GM10248 (cell line): ENCODE measurements at regions of chr19 and their contacts with region 1.

Region 1: DNA sequence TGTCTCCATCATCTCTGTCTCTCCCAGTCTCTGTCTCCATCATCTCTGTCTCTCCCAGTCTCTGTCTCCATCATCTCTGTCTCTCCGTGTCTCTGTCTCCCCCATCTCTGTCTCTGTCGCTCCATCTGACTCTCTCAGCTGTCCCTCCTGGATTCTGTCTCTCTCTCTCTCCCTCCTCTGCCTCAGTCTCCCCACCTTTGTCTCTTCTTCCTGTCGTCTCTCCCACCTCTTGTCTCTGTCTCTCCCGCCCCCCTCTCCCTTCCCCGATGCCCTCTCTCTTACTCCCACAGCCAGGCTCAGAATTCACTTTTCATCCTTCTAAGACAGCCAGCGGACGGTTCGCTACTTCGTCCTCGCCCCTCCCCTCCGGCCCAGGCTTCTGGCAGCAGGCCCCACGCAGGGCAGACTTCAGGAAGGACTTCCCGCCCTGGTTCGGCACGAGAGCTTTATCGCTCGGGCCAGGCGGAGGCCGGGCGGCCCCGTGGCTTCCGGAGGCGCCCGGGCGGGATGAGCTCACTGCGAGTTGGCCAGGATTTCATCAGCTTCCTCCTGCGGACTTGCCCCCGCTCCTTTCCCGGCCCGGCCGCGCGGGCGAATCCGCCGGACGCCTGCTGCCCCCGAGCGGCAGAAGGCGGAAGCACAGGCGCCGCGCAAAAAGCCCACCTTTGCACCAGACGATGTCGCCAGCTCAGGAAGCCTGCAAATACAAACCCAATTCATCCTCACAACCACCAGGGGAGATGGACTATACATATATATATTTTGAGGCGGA is 12.4 kb upstream of the CCDC9 start:
- DNase-seq: peak; percentile 89
- CTCF ChIP-seq: peak; percentile 99

Region 2: DNA sequence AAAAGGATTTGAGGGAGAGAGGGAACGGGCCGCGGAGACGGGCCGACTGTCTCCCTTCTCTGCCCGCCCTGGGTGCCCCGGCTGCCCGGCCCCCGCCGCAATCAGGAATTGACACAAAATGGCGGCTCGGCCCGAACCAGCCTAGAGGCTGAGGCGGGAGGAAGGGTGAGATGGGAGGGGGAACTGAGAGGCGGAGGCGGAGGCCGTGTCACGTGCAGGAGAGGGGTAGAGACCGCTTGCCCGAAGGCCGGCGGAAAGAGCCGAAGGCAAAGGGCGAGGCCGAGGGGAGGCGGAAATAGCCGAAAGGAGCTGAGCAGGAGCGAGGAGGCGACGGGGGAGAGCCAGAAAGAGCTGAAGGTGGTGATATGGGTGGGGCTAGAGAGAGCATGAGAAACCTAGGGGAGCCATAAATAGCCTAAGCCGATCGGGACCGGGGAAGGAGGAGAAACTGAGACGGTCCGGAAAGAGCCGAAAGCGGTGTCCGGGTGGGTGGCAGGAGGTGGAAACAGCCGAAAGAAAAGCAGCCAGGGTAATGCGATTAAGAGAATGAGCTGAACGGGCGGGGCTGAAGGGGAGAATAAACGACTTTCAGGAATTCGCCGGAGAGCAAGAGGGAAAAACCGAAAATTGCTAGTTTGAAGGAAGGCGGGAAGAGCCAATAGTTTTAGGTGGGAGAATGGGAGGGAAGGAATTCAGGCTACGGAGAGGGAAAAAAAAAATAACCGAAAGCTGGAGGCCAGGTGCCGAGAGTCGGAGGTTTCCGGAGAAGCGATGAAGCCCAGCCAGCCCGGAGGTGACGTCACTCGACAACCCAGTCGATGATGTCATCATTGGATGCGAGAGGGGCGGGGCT is 130.7 kb before region 1 on chr19 and contains the start of gene ZC3H4:
- CTCF ChIA-PET with region 1: interaction called, 17 read pairs
- POLR2A ChIA-PET with region 1: interaction called, 5 read pairs
- DNase-seq: peak; percentile 98
- CTCF ChIP-seq: no peak

Region 3: DNA sequence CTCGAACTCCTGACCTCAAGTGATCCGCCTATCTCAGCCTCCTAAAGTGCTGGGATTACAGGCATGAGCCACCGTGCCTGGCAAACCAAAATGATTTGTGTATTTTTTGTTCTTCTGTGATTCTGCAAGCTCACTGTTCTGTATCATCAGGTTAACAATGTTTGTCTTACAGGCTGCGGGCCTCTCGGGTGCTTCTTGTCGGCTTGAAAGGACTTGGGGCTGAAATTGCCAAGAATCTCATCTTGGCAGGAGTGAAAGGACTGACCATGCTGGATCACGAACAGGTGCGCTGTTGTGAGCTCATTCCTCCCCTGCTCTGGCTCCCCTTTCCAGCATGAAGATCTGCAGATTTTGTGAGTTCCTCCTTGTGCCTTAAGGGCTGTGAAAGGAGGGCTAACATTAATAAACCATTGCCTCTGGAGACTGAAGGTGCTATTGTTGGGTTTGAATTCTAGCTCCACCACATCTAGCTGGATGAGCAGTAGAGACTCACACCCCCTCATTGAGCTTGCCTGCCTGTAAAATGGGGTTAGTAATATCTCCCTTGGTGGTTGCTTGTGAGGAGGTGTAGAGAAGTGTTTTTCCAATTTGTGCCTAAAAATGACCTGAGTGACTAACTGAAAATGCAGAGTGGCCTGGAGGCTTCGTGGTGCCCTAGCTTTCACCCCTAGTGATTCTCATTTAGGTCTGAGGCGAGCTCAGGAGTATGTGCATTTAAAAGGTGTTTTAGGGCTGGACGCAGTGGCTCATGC is 100.5 kb before region 1 on chr19:
- CTCF ChIA-PET with region 1: interaction called, 194 read pairs
- POLR2A ChIA-PET with region 1: no interaction called
- DNase-seq: no peak
- CTCF ChIP-seq: no peak

Region 4: GRCh38 chr19:47190167-47190727 is 53.7 kb before region 1 on chr19:
- CTCF ChIA-PET with region 1: interaction called, 24 read pairs
- POLR2A ChIA-PET with region 1: interaction called, 5 read pairs
- DNase-seq: no peak
- CTCF ChIP-seq: no peak

Region 5: GRCh38 chr19:47231215-47231984 is 12.6 kb before region 1 on chr19:
- CTCF ChIA-PET with region 1: interaction called, 76 read pairs
- POLR2A ChIA-PET with region 1: interaction called, 56 read pairs
- DNase-seq: peak; percentile 90
- CTCF ChIP-seq: no peak